Activated T-helper 1 cell treated with anti-CD3 and anti-CD28 coated beads, Interleukin-12 subunit alpha, Interleukin-12 subunit beta, Interleukin-2, Interleukin-4 antibody, amounts not matched to agents 30 ng/mL and 10 ng/mL and 1 ng/mL, durations not matched to agents 14 hours and 24 hours and 36 hours (primary cell): ENCODE measurements at regions of chr6 and their contacts with region 1.

Region 1: DNA sequence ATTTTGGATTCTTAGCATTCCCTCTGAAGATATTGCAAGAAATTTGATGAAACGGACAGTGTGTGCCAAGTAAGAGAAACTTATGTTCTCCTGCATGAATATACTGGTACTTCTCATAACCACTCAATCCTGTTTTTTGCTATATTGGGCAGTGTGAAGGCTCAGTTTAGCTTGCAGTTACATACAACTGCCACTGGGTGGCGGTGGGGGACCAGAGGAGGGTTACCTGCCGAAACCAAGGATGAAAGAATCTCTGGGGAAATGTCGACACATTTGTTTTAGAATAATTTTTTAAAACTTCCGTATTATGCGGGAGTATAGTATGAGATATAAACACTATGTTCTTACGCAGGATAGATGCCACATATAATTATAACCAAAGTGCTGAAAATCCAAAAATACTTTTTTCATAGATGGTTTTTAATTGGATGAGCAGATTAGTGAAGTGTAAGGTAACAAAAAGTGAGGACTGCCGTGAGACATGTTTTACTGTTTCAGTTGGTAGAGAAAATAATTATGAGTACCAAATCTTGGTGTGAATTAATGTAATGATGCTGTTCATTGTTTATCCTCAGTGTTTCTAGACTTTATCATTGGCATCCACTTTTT is 9.7 kb downstream of the TRMT11 start:
- DNase-seq: peak; percentile 60
- H3K4me3 Mint-ChIP-seq: peak overlapping the region; percentile 45
- H3K27ac Mint-ChIP-seq: no peak overlapping the region
- H3K4me1 Mint-ChIP-seq: peaks cover 18% of the 10 kb centered on the region
- H3K27me3 Mint-ChIP-seq: no peaks in the 10 kb centered on the region

Region 2: GRCh38 chr6:126007800-126008199 is 11.7 kb after region 1 on chr6:
- intact Hi-C with region 1: no loop called
- DNase-seq: no peak
- H3K4me3 Mint-ChIP-seq: no peak overlapping the region
- H3K27ac Mint-ChIP-seq: no peak overlapping the region
- H3K4me1 Mint-ChIP-seq: peaks cover 4% of the 10 kb centered on the region
- H3K27me3 Mint-ChIP-seq: no peaks in the 10 kb centered on the region

Region 3: DNA sequence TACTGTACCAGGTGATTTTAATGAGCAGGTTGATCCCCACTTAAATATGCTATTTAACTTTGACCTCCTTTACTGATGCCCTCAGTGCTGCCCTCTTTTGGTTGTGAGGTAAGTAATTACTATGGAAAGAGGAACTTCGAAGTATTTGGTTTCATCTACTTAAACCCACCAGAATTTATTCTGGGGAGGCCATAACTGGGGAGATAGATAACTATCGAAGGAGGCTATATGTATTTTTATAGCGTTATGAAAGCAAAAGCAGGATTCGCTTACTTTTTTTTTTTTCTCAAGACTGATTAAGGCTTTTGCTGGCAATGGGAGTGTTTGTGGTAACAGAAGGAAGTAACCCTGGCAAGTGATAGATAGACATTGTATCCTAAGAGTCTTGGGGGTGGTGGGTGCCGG is 174.9 kb after region 1 on chr6:
- intact Hi-C with region 1: loop called (anchors 1 kb)
- DNase-seq: no peak
- H3K4me3 Mint-ChIP-seq: no peak overlapping the region
- H3K27ac Mint-ChIP-seq: no peak overlapping the region
- H3K4me1 Mint-ChIP-seq: peaks cover 7% of the 10 kb centered on the region
- H3K27me3 Mint-ChIP-seq: peaks cover 5% of the 10 kb centered on the region

Region 4: GRCh38 chr6:126657561-126658175 is 661.6 kb after region 1 on chr6:
- intact Hi-C with region 1: loop called (anchors 10 kb)
- DNase-seq: no peak
- H3K4me3 Mint-ChIP-seq: no peak overlapping the region
- H3K27ac Mint-ChIP-seq: no peak overlapping the region
- H3K4me1 Mint-ChIP-seq: no peaks in the 10 kb centered on the region
- H3K27me3 Mint-ChIP-seq: no peaks in the 10 kb centered on the region

Region 5: GRCh38 chr6:127186889-127187288 is 1190.8 kb after region 1 on chr6:
- intact Hi-C with region 1: loop called (anchors 2 kb)
- DNase-seq: peak; percentile 31
- H3K4me3 Mint-ChIP-seq: no peak overlapping the region
- H3K27ac Mint-ChIP-seq: no peak overlapping the region
- H3K4me1 Mint-ChIP-seq: no peaks in the 10 kb centered on the region
- H3K27me3 Mint-ChIP-seq: peaks cover 5% of the 10 kb centered on the region